Activated CD4-positive, alpha-beta memory T cell treated with anti-CD3 and anti-CD28 coated beads for 36 hours (primary cell): ENCODE measurements at regions of chr1 and their contacts with region 1.

Region 1: GRCh38 chr1:200620273-200621131 is at the start of gene KIF14:
- DNase-seq: peak; percentile 96
- H3K4me3 Mint-ChIP-seq: peak within 1 kb of the TSS; percentile 87
- H3K27ac Mint-ChIP-seq: peak within 1 kb of the TSS; percentile 66
- H3K4me1 Mint-ChIP-seq: peaks cover 23% of the 10 kb centered on the region
- H3K27me3 Mint-ChIP-seq: no peaks in the 10 kb centered on the region
- total RNA-seq, gene KIF14: 15.7 to 17.1 TPM

Region 2: DNA sequence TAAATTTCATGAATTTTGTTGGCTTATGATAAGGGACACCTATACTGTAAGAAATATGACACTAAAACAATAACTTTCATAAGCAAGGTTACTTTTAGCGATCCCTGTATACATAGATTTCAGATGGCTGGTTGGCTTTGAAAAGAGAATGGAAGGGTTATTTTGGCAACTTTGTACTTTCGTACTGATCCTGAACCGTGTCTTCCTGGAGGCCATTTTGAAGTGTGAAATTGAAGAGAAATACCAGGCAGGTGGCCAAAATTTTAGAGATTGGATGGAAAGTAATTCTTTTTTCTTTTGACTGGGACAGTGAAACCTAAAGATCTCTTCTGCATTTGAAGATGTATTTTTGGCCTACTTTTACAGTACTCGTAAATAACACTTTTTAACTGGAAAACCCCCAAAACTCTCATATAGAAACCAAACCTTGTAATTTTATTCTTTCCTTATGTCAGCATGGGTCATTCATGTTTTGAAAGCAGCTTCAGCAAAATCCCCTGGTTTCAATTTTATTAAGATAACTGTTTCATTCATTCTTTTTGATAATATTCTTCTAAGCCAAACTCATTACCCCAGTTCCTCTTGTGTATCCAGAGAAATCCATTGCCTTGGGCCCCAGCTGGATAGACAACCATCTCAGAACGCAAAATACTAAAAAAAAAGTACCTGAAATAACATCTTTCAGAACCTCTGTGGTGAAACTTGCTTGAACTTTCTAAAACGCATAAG is 172.3 kb before region 1 on chr1:
- CTCF ChIA-PET with region 1: no interaction called
- POLR2A ChIA-PET with region 1: no interaction called
- intact Hi-C with region 1: loop called (anchors 10 kb)
- DNase-seq: peak; percentile 24
- H3K4me3 Mint-ChIP-seq: peak overlapping the region; percentile 38
- H3K27ac Mint-ChIP-seq: peak overlapping the region; percentile 87
- H3K4me1 Mint-ChIP-seq: peaks cover 41% of the 10 kb centered on the region
- H3K27me3 Mint-ChIP-seq: no peaks in the 10 kb centered on the region

Region 3: DNA sequence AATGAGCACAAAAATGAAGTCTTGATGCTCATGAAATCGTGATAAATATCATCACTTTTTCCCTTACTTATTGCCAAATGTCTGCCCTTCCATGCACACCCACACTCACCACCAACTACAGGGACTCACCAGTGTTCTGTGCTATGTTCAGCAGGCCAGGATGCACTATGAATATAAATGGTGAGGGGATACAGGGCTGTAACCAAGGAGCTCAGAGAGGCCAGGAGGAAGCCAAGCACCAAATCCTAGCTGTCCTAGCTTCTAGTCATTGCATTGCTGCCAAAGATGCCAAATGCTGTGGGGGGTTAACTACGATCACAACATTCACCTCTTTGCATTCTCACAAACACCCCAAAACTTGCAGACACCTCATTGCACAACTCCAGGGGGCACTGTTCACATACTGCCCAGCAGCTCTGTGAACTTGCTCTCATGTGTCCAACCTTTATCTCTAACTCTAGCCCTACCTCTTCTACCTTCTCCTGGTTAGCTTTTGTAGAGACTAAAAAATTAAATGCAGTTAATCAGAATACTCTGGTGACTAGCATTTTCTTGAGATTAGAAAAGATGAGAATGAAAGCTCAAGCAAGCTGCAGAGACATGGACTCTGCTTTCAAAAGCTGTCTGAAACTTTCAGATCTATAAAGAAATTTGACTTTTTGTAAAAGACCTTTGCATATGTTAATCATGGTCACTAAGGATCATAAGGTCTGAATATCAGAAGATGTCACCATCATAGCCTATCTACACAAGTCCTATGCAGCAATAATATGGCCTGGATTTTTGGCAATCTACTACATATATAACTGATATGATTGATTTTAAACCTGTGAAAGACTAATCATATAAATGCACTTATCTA is 14.0 kb after region 1 on chr1:
- CTCF ChIA-PET with region 1: interaction called, 14 read pairs
- POLR2A ChIA-PET with region 1: no interaction called
- intact Hi-C with region 1: no loop called
- DNase-seq: no peak
- H3K4me3 Mint-ChIP-seq: no peak overlapping the region
- H3K27ac Mint-ChIP-seq: no peak overlapping the region
- H3K4me1 Mint-ChIP-seq: no peaks in the 10 kb centered on the region
- H3K27me3 Mint-ChIP-seq: no peaks in the 10 kb centered on the region

Region 4: GRCh38 chr1:200738740-200739498 is 118.4 kb after region 1 on chr1 and contains the start of gene CAMSAP2:
- CTCF ChIA-PET with region 1: interaction called, 13 read pairs
- POLR2A ChIA-PET with region 1: no interaction called
- intact Hi-C with region 1: loop called (anchors 2 kb)
- DNase-seq: peak; percentile 73
- H3K4me3 Mint-ChIP-seq: peak within 1 kb of the TSS; percentile 96
- H3K27ac Mint-ChIP-seq: peak within 1 kb of the TSS; percentile 88
- H3K4me1 Mint-ChIP-seq: peaks cover 34% of the 10 kb centered on the region
- H3K27me3 Mint-ChIP-seq: peaks cover 3% of the 10 kb centered on the region
- total RNA-seq, gene CAMSAP2: 3.0 to 4.1 TPM

Region 5: GRCh38 chr1:200802865-200803512 is 182.5 kb after region 1 on chr1:
- CTCF ChIA-PET with region 1: interaction called, 113 read pairs
- POLR2A ChIA-PET with region 1: interaction called, 3 read pairs
- intact Hi-C with region 1: loop called (anchors 1 kb)
- DNase-seq: peak; percentile 83
- H3K4me3 Mint-ChIP-seq: no peak overlapping the region
- H3K27ac Mint-ChIP-seq: no peak overlapping the region
- H3K4me1 Mint-ChIP-seq: no peaks in the 10 kb centered on the region
- H3K27me3 Mint-ChIP-seq: no peaks in the 10 kb centered on the region

Region 6: DNA sequence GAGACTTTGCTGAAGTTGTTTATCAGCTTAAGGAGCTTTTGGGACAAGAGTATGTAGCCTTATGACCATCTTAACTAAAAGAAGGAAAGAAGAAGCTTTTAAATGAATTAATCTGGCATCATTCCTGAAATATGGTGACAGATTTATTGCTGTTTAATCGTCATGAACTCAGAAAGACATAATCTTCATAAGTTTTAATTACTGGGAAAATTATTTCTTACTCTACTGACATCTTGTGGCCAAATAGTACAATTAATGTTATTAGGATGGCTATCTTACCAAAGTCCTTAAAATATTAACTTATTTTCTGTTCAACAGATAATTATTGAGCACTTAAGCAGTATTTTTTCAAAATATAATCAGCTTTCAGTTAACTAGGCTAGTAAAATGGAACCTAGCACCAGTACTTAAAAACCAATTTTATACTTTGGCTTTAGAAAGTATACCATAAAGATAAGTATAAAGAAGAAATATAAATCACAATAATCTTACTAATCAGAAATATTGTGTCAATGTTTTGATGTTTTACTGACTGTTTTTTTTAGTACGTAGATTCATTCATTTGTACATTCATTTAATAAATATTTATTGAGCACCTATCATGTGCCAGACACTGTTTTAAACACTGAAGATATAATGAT is 217.5 kb after region 1 on chr1:
- CTCF ChIA-PET with region 1: interaction called, 24 read pairs
- POLR2A ChIA-PET with region 1: interaction called, 4 read pairs
- intact Hi-C with region 1: no loop called
- DNase-seq: no peak
- H3K4me3 Mint-ChIP-seq: no peak overlapping the region
- H3K27ac Mint-ChIP-seq: no peak overlapping the region
- H3K4me1 Mint-ChIP-seq: no peaks in the 10 kb centered on the region
- H3K27me3 Mint-ChIP-seq: no peaks in the 10 kb centered on the region

Region 7: GRCh38 chr1:200896531-200897196 is 276.2 kb after region 1 on chr1:
- CTCF ChIA-PET with region 1: no interaction called
- POLR2A ChIA-PET with region 1: no interaction called
- intact Hi-C with region 1: no loop called
- DNase-seq: no peak
- H3K4me3 Mint-ChIP-seq: no peak overlapping the region
- H3K27ac Mint-ChIP-seq: no peak overlapping the region
- H3K4me1 Mint-ChIP-seq: peaks cover 6% of the 10 kb centered on the region
- H3K27me3 Mint-ChIP-seq: peaks cover 44% of the 10 kb centered on the region

Region 8: GRCh38 chr1:201114236-201115131 is 494.0 kb after region 1 on chr1:
- CTCF ChIA-PET with region 1: interaction called, 3 read pairs
- POLR2A ChIA-PET with region 1: no interaction called
- intact Hi-C with region 1: loop called (anchors 5 kb)
- DNase-seq: peak; percentile 89
- H3K4me3 Mint-ChIP-seq: peak overlapping the region; percentile 86
- H3K27ac Mint-ChIP-seq: peak overlapping the region; percentile 6
- H3K4me1 Mint-ChIP-seq: no peaks in the 10 kb centered on the region
- H3K27me3 Mint-ChIP-seq: no peaks in the 10 kb centered on the region